Activated T-helper 1 cell treated with anti-CD3 and anti-CD28 coated beads, Interleukin-12 subunit alpha, Interleukin-12 subunit beta, Interleukin-2, Interleukin-4 antibody, amounts not matched to agents 30 ng/mL and 10 ng/mL and 1 ng/mL, durations not matched to agents 14 hours and 24 hours and 36 hours (primary cell): ENCODE measurements at regions of chr2 and their contacts with region 1.

Region 1: GRCh38 chr2:168346725-168347477 is 99.5 kb upstream of the STK39 start:
- DNase-seq: peak; percentile 43
- H3K4me3 Mint-ChIP-seq: peak overlapping the region; percentile 72
- H3K27ac Mint-ChIP-seq: no peak overlapping the region
- H3K4me1 Mint-ChIP-seq: peaks cover 9% of the 10 kb centered on the region
- H3K27me3 Mint-ChIP-seq: peaks cover 19% of the 10 kb centered on the region

Region 2: GRCh38 chr2:168363347-168364092 is 16.6 kb after region 1 on chr2:
- intact Hi-C with region 1: no loop called
- DNase-seq: no peak
- H3K4me3 Mint-ChIP-seq: no peak overlapping the region
- H3K27ac Mint-ChIP-seq: no peak overlapping the region
- H3K4me1 Mint-ChIP-seq: peaks cover 8% of the 10 kb centered on the region
- H3K27me3 Mint-ChIP-seq: peaks cover 3% of the 10 kb centered on the region

Region 3: DNA sequence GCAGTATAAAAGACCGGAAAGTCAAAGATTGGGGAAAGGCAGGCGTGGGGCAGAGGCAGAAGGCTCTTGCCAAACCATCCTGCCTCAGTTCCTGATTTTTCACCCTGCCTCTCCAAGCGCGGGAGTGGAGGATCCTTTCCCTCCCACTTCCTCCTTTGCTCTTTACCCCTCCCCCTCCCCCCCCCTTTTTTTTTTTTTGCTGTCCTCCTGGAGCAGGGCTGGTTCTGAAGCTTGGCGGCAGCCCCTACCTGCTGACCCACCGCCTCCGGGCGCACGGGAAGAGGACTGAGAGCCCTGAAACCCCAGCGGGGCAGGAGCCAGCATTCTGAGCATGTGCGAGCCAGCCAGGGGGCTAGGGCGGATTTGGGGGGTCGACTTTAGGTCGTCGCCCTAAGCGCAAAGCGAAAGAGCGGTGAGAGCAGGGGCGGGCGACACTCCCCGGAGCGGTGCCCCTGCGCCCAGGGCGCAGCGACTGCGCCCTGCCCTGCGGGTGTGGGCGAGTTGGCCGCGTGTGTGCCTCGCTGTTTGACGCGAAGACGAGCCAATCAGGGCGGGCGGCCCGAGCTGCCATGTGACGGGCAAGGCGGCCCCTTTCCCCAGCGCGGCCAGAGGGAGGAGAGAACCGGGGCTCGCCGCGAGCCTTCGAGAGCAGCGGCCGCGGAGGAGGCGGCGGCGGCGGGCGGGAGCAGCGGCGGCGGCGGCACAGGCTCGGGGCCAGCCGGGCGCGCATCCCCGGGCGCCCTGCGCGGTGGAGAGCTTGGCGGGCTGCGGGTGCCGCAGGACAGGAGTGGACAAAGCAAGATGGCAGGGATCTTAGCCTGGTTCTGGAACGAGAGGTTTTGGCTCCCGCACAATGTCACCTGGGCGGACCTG is 109.0 kb after region 1 on chr2 and contains the start of gene CERS6:
- intact Hi-C with region 1: loop called (anchors 1 kb)
- DNase-seq: peak; percentile 85
- H3K4me3 Mint-ChIP-seq: peak within 1 kb of the TSS; percentile 93
- H3K27ac Mint-ChIP-seq: peak within 1 kb of the TSS; percentile 80
- H3K4me1 Mint-ChIP-seq: peaks cover 37% of the 10 kb centered on the region
- H3K27me3 Mint-ChIP-seq: peaks cover 3% of the 10 kb centered on the region
- total RNA-seq, gene CERS6: 27.0 and 27.1 TPM in 2 replicates

Region 4: GRCh38 chr2:168614172-168615018 is 267.5 kb after region 1 on chr2:
- intact Hi-C with region 1: loop called (anchors 1 kb)
- DNase-seq: no peak
- H3K4me3 Mint-ChIP-seq: no peak overlapping the region
- H3K27ac Mint-ChIP-seq: no peak overlapping the region
- H3K4me1 Mint-ChIP-seq: peaks cover 6% of the 10 kb centered on the region
- H3K27me3 Mint-ChIP-seq: no peaks in the 10 kb centered on the region

Region 5: DNA sequence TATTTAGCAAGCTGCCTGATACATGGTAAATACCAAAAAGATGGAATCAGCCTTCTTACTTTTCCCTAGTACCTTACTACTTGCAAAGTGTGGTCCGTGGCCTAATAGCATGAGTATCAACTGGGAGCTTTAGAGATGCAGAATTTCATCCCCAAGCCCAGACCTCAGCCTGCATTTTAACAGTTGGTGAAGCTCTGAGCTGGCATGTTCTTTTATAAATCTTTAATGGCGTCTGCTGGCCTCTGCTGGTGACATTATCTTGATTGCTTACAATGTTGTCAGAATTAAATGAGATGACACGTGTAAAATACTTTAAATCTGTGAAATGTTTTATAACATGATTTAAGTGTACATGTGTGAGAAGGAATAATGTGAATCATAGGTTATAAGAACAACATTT is 340.4 kb after region 1 on chr2:
- intact Hi-C with region 1: loop called (anchors 1 kb)
- DNase-seq: no peak
- H3K4me3 Mint-ChIP-seq: no peak overlapping the region
- H3K27ac Mint-ChIP-seq: no peak overlapping the region
- H3K4me1 Mint-ChIP-seq: peaks cover 15% of the 10 kb centered on the region
- H3K27me3 Mint-ChIP-seq: no peaks in the 10 kb centered on the region

Region 6: GRCh38 chr2:168705534-168706470 is 358.9 kb after region 1 on chr2:
- intact Hi-C with region 1: loop called (anchors 1 kb)
- DNase-seq: no peak
- H3K4me3 Mint-ChIP-seq: no peak overlapping the region
- H3K27ac Mint-ChIP-seq: no peak overlapping the region
- H3K4me1 Mint-ChIP-seq: no peaks in the 10 kb centered on the region
- H3K27me3 Mint-ChIP-seq: no peaks in the 10 kb centered on the region

Region 7: GRCh38 chr2:168758970-168759820 is 412.3 kb after region 1 on chr2:
- intact Hi-C with region 1: loop called (anchors 1 kb)
- DNase-seq: no peak
- H3K4me3 Mint-ChIP-seq: no peak overlapping the region
- H3K27ac Mint-ChIP-seq: no peak overlapping the region
- H3K4me1 Mint-ChIP-seq: peaks cover 15% of the 10 kb centered on the region
- H3K27me3 Mint-ChIP-seq: no peaks in the 10 kb centered on the region

Region 8: DNA sequence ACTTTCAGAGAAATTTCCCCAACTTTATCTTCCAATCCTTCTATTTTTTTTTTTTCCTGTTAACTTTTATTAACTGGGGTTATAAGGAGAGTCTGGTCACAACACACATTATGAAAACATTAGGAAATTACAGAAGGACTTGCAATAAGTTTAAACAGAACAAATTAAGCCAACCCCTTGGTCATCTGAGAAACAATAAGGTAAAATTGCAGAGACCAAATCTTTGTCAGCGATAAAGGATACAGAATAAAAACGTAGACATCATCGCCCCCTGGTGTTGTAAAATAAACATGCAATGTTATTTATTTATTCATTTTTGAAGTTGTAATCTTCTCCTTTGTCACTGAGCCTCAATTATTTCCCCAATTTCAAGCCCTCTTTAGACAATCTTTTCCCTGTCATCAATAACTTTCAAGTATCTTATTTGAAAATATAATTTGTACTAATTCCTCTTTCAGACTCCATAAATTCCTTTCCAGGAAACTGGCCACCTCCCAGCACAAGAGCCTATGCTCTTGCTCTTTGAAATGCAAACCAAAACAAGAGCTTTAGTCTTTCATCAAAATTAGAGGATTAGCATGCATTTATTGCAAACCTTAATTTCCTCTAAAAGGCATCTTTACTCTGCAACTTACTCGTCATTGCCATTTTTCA is 573.7 kb after region 1 on chr2:
- intact Hi-C with region 1: loop called (anchors 1 kb)
- DNase-seq: no peak
- H3K4me3 Mint-ChIP-seq: no peak overlapping the region
- H3K27ac Mint-ChIP-seq: no peak overlapping the region
- H3K4me1 Mint-ChIP-seq: peaks cover 7% of the 10 kb centered on the region
- H3K27me3 Mint-ChIP-seq: peaks cover 19% of the 10 kb centered on the region